ENCODE measurements at regions of chr15 and their contacts with region 1.

Region 1: DNA sequence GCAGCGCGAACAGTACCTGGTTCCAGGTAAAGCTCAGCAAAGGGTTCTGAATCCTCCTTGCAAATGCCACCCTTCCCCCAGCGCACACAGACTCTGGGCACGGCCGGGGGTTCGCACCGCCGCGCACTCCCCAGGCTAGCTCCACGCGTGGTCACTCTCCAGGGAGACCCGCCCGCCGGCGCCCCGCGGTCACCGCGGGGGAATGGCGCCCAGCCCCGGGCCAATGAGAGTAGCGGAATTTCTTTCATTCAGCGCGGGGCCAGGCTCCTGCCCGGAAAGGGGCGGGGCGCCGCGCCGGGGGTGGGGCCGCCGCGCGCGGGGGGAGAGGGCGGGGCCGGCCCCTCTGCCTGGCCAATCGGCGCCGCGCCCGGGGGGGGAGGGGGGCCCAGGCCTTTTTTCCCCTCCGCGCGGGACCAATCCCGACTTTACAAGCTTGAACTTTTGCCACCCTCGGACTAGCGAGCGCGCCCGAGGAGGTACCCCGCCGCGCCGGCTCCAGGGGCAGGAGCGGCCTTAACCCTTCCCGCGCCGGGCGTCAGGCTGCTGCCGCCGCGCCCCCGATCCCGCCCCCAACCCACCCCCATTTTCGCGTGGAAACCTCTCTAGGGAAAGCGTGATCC is 1.1 kb upstream of the SMAD6 start:
- DNase-seq: peak; percentile 96
- ATAC-seq: peak; percentile 75 to 87 (median 84)
- H3K4me3 ChIP-seq: peak overlapping the region; percentile 62 to 85 (median 78)
- H3K27ac ChIP-seq: peak overlapping the region; percentile 57 to 97 (median 92)
- H3K4me1 ChIP-seq: peaks cover 4 to 51% (median 35%) of the 10 kb centered on the region in 9 donors
- H3K27me3 ChIP-seq: peaks cover 0 to 32% (median 0%) of the 10 kb centered on the region in 7 donors
- CTCF ChIP-seq: no peak

Region 2: GRCh38 chr15:66603301-66604179 is 97.4 kb before region 1 on chr15:
- intact Hi-C with region 1: loop called in 3 of 10 experiments (anchors 5 kb)
- DNase-seq: peak; percentile 60 to 71
- ATAC-seq: peak; percentile 68 to 93 (median 84)
- H3K4me3 ChIP-seq: no peak overlapping the region
- H3K27ac ChIP-seq: no peak overlapping the region
- H3K4me1 ChIP-seq: peaks cover 0 to 6% (median 0%) of the 10 kb centered on the region in 9 donors
- H3K27me3 ChIP-seq: no peaks in the 10 kb centered on the region
- CTCF ChIP-seq: peak; percentile 77 to 88 (median 84)

Region 3: GRCh38 chr15:66619151-66619903 is 81.6 kb before region 1 on chr15:
- intact Hi-C with region 1: loop called (anchors 1 to 5 kb)
- DNase-seq: peak; percentile 76 to 78
- ATAC-seq: peak; percentile 51 to 79 (median 67)
- H3K4me3 ChIP-seq: no peak overlapping the region
- H3K27ac ChIP-seq: peak overlapping the region; percentile 2 to 91 (median 70)
- H3K4me1 ChIP-seq: peaks cover 9 to 76% (median 49%) of the 10 kb centered on the region in 9 donors
- H3K27me3 ChIP-seq: peaks cover 0 to 12% (median 0%) of the 10 kb centered on the region in 7 donors
- CTCF ChIP-seq: peak; percentile 88 to 94 (median 93)

Region 4: GRCh38 chr15:66654739-66655375 is 46.1 kb before region 1 on chr15:
- intact Hi-C with region 1: loop called in 2 of 10 experiments (anchors 5 kb)
- DNase-seq: peak; percentile 45 to 56
- ATAC-seq: peak; percentile 35 to 82 (median 68)
- H3K4me3 ChIP-seq: peak overlapping the region in 9 of 10 donors; percentile 23 to 49 (median 38)
- H3K27ac ChIP-seq: peak overlapping the region in 9 of 10 donors; percentile 27 to 83 (median 74)
- H3K4me1 ChIP-seq: peaks cover 4 to 64% (median 32%) of the 10 kb centered on the region in 9 donors
- H3K27me3 ChIP-seq: peaks cover 0 to 6% (median 0%) of the 10 kb centered on the region in 7 donors
- CTCF ChIP-seq: no peak

Region 5: DNA sequence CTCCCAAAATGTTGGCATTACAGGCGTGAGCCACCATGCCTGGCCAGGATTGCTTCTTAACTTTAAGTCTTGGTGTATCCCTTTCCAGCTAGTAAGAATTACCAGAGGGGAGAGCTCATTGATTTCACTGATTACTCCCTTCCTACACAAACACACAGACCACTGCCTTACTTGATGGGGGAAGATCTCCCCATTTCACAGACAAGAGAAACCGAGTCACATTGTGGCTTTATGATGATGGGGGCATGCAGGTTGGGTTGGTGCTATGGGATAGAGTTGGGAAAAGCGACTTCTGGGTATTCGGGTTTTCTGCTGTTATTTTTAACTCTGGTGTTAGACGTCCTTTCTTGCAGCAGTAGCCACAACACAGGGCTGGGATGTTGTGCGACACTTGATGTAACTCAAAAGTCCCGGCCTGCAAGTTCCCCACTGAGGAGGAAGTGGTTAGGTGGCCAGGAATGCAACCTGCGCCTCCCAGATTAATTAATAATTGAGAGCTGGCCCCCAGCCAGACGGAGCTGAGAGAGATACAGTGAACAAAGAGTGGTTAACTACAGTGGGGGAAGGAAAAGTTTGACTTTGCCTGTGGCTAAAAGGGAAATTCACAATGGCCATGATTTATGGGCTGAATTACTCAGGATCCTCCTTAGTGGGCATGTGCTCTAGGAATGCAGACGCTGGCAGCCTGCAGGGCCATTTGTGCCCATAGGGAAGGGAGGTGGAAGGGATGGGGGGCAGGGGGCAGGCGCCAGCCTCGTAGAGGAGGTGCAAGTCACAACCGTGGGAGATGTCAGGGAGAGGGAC is 64.8 kb after region 1 on chr15:
- intact Hi-C with region 1: loop called in 6 of 10 experiments (anchors 2 to 10 kb)
- DNase-seq: peak in 1 of 2 donors; percentile 58
- ATAC-seq: peak in 3 of 8 donors; percentile 2 to 5 (median 4)
- H3K4me3 ChIP-seq: no peak overlapping the region
- H3K27ac ChIP-seq: peak overlapping the region in 7 of 10 donors; percentile 35 to 96 (median 66)
- H3K4me1 ChIP-seq: peaks cover 39 to 87% (median 69%) of the 10 kb centered on the region in 9 donors
- H3K27me3 ChIP-seq: peaks cover 0 to 7% (median 0%) of the 10 kb centered on the region in 7 donors
- CTCF ChIP-seq: no peak

Region 6: DNA sequence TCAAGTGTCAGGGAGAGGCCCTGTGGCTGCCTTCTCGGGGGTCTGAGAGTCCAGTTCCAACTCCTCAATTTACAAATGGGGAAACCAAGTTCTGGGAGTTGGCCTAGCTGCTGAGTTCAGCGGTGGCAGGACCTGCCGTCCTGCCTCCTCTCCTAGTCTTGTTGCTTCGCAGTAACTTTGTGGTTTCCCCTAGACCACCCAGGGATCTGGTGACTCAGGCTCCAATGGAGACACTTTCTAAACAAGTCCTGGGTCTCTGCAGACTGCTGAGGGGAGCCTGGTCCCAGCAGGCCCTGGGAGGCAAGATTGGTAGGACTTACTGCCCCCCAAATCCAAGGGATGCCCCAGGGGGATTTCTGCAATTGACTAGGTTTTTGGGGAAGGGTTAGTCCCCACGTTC is 84.7 kb after region 1 on chr15:
- intact Hi-C with region 1: no loop called
- DNase-seq: no peak
- ATAC-seq: no peak
- H3K4me3 ChIP-seq: no peak overlapping the region
- H3K27ac ChIP-seq: no peak overlapping the region
- H3K4me1 ChIP-seq: peaks cover 0 to 22% (median 8%) of the 10 kb centered on the region in 9 donors
- H3K27me3 ChIP-seq: no peaks in the 10 kb centered on the region
- CTCF ChIP-seq: no peak

Region 7: GRCh38 chr15:66841953-66842681 is 141.2 kb after region 1 on chr15:
- intact Hi-C with region 1: loop called in 2 of 10 experiments (anchors 5 kb)
- DNase-seq: peak; percentile 84 to 86
- ATAC-seq: peak; percentile 88 to 93 (median 90)
- H3K4me3 ChIP-seq: peak overlapping the region; percentile 6 to 62 (median 55)
- H3K27ac ChIP-seq: peak overlapping the region; percentile 87 to 98 (median 96)
- H3K4me1 ChIP-seq: peaks cover 13 to 55% (median 41%) of the 10 kb centered on the region in 9 donors
- H3K27me3 ChIP-seq: no peaks in the 10 kb centered on the region
- CTCF ChIP-seq: peak in 1 of 9 donors; percentile 8

Region 8: GRCh38 chr15:66862878-66863335 is 162.0 kb after region 1 on chr15:
- intact Hi-C with region 1: loop called in 1 of 10 experiments (anchors 10 kb)
- DNase-seq: peak; percentile 82 to 84
- ATAC-seq: peak; percentile 71 to 92 (median 87)
- H3K4me3 ChIP-seq: no peak overlapping the region
- H3K27ac ChIP-seq: no peak overlapping the region
- H3K4me1 ChIP-seq: peaks cover 0 to 33% (median 21%) of the 10 kb centered on the region in 9 donors
- H3K27me3 ChIP-seq: no peaks in the 10 kb centered on the region
- CTCF ChIP-seq: peak; percentile 90 to 97 (median 93)

Region 9: DNA sequence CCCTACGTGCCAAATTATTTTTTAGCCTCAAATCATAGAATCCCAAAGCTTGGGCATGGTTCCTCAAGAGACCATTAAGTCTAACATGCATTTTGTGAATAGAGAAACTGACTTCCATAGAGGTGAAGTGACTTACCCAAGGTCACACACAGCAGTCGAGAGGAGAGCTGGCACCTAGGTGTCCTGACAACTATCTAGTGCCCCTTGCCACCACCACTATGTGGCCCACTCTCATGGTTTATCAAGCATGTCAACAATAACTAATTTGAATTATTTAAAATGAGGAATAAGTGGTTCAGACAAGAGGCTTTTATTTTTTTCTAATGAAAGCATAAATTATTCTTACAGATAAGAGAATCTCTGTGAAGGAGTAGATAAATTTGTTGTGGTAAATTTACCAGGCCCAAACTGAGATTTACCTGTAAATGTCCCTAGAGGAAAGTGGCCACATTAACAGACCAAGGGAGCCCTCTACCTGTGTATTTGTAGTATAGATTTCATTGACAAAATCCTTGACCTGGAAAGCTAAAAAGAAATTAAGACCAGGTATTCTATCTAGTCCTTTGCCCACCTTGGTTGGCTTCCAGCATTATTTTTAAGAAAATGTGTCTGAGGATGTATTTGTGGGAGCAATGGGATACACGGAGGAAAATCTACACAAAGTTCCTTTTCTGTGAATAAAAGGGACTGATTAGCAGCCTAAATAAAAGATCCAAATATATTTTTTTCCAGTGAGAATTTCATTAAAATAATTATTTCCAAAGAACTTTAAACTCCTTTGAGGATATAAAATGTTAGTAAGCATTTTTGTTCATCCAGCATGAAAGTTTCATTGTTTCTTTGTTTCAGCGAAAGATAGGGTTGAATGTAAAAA is 602.8 kb after region 1 on chr15:
- intact Hi-C with region 1: no loop called
- DNase-seq: peak in 1 of 2 donors; percentile 6
- ATAC-seq: peak in 2 of 8 donors; percentile 58 to 65
- H3K4me3 ChIP-seq: no peak overlapping the region
- H3K27ac ChIP-seq: no peak overlapping the region
- H3K4me1 ChIP-seq: no peaks in the 10 kb centered on the region
- H3K27me3 ChIP-seq: no peaks in the 10 kb centered on the region
- CTCF ChIP-seq: peak; percentile 17 to 75 (median 57)